ENCODE measurements at regions of chr17 and their contacts with region 1.

Region 1: DNA sequence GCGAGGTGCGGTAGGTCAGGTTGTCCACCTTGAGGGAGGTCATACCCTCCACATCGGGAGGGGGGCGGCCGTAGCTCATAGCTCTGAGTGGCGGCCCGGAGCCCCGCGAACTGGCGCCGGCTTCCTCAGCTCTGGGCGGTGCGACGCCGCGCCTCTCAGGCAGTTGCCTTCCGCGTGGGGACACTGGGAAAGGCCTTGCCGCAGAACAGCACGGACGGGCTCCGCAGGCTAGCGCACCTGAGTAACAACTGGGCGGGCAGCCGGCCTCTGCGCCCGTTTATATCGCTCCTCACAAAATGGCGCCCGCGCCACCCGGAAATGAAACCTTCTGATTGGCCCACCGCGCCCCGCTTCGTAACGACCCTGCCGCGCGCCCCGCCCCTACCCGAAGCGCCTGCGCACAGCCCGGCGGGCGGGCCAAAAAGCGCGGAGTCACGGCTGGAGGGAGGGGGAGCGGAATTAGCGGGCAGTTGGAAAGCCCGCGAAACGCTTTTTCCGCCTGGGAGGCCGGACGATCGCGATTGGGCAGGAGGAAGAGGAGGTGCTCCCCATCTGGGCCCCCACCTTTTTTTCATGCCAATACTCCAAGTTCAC is at the start of gene SRSF2:
- DNase-seq: peak; percentile 96 to 99
- ATAC-seq: peak; percentile 71 to 84
- H3K4me3 ChIP-seq: peak within 1 kb of the TSS; percentile 95
- H3K27ac ChIP-seq: peak within 1 kb of the TSS; percentile 97 to 98
- H3K4me1 ChIP-seq: peaks cover 37% of the 10 kb centered on the region
- CTCF ChIP-seq: no peak
- EP300 ChIP-seq: no peak; a peak in 1 of 5 replicates
- POLR2A ChIP-seq: peak; percentile 100
- RAD21 ChIP-seq: no peak
- polyA plus RNA-seq, gene SRSF2: 348 and 412 TPM in 2 replicates

Region 2: GRCh38 chr17:76643553-76644148 is 93.5 kb before region 1 on chr17 and contains the start of gene ST6GALNAC1:
- CTCF ChIA-PET with region 1: no interaction called
- POLR2A ChIA-PET with region 1: no interaction called
- DNase-seq: peak in 1 of 2 experiments; percentile 45
- ATAC-seq: no peak; a peak in 1 of 6 replicates
- H3K4me3 ChIP-seq: no peak within 1 kb of the TSS
- H3K27ac ChIP-seq: peak within 1 kb of the TSS; percentile 14 to 65; a peak in 5 of 6 replicates
- H3K4me1 ChIP-seq: peaks cover 41% of the 10 kb centered on the region
- CTCF ChIP-seq: no peak
- EP300 ChIP-seq: no peak
- POLR2A ChIP-seq: no peak
- RAD21 ChIP-seq: no peak
- polyA plus RNA-seq, gene ST6GALNAC1: 0.63 and 0.72 TPM in 2 replicates

Region 3: DNA sequence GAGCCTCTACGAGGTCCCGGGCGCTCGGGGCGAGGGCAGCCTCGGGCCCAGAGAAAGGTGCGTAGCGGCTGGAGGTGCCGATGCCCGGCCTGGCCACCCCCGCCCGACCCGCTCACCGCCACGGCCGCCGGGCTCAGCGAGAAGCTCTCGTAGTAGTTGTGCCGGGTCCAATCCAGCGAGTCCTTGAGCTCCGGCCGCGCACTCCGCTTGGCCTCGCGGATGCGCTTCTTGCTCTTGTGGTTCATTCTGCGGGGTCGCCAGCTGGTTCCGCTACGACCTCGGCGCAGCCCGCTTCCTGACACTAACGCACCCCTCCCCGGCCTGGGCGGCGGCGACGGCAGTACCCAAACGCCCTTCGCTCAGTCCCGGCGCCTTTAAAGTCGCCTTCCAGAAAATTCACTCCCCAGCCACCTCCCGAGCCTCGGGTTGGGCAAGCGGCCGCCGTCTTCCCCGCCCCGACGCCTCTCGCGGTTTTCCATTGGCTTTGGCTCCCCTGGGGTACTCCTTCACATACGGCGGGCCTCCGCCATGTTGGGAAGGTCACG is 10.9 kb before region 1 on chr17 and contains the start of gene JMJD6:
- CTCF ChIA-PET with region 1: interaction called, 11 read pairs
- POLR2A ChIA-PET with region 1: interaction called, 10 read pairs
- DNase-seq: peak; percentile 98 to 99
- ATAC-seq: peak; percentile 84 to 91
- H3K4me3 ChIP-seq: peak within 1 kb of the TSS; percentile 97
- H3K27ac ChIP-seq: peak within 1 kb of the TSS; percentile 93 to 99
- H3K4me1 ChIP-seq: peaks cover 17% of the 10 kb centered on the region
- CTCF ChIP-seq: no peak
- EP300 ChIP-seq: no peak
- POLR2A ChIP-seq: peak; percentile 90
- RAD21 ChIP-seq: no peak
- polyA plus RNA-seq, gene JMJD6: 17.5 and 23.0 TPM in 2 replicates